Activated T-helper 1 cell treated with anti-CD3 and anti-CD28 coated beads, Interleukin-12 subunit alpha, Interleukin-12 subunit beta, Interleukin-2, Interleukin-4 antibody, amounts not matched to agents 30 ng/mL and 10 ng/mL and 1 ng/mL, durations not matched to agents 14 hours and 24 hours and 36 hours (primary cell): ENCODE measurements at regions of chr11 and their contacts with region 1.

Region 1: DNA sequence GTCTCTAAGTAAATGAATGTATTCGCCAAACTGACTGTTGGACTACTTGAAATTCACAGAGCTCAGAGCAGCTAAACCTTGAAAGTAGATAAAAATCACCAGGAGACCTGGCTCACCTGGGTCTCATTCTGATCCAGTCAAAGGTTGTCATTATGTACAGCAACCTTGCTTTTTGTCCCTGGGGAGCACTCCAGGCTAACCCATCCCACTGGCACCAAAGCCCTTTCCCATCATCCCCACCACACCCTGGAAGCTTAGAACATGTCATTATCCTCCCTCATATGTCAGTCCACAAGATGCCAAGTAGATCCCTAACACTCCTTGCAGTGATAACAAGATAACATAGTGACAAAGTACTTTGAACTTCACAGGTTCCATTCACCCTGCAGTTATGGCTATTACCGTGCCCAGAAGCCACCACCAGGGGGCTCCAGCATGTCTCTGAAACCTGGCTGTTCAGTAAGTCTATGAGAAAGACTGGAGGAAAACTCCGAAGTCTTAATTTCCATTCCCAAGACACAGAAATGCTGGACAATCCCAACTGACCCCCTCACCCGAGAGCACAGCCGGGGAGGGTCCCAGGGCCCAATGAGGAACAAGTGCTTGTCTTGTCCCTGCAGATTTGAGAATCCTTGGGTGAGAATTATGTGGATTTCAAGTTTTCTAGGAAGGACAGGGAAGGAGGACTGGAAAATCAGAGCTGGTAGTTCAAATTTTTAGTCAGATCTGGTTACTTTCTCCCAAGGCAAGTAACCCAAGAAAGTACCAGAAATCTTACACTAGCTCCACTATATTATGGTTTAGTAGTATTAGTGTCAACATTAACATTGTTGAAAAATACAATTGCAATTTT is 43.0 kb upstream of the USP47 start:
- DNase-seq: peak; percentile 30
- H3K4me3 Mint-ChIP-seq: no peak overlapping the region
- H3K27ac Mint-ChIP-seq: no peak overlapping the region
- H3K4me1 Mint-ChIP-seq: no peaks in the 10 kb centered on the region
- H3K27me3 Mint-ChIP-seq: peaks cover 18% of the 10 kb centered on the region

Region 2: GRCh38 chr11:11848891-11849746 is 50.3 kb after region 1 on chr11:
- intact Hi-C with region 1: loop called (anchors 1 kb)
- DNase-seq: peak; percentile 47
- H3K4me3 Mint-ChIP-seq: no peak overlapping the region
- H3K27ac Mint-ChIP-seq: no peak overlapping the region
- H3K4me1 Mint-ChIP-seq: peaks cover 44% of the 10 kb centered on the region
- H3K27me3 Mint-ChIP-seq: peaks cover 2% of the 10 kb centered on the region

Region 3: DNA sequence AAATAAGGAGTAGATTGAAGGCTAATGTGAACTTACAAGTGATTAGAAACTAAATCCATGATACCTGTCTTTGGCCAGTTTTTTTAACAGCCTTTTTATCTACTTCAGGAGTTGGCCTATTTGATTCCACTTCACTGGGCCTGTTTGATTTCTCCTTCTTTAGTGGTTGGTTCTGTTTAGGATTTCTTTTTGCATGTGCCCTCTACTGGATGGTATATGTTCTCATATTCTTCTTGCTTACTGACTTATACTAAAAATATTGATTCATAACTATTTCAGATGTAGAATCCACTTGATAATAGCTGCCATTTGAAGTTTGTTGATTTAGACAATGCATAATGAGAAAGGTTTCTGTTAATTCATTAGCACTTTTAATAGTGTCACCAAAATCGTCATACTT is 96.9 kb after region 1 on chr11:
- intact Hi-C with region 1: loop called (anchors 5 kb)
- DNase-seq: no peak
- H3K4me3 Mint-ChIP-seq: no peak overlapping the region
- H3K27ac Mint-ChIP-seq: no peak overlapping the region
- H3K4me1 Mint-ChIP-seq: peaks cover 14% of the 10 kb centered on the region
- H3K27me3 Mint-ChIP-seq: no peaks in the 10 kb centered on the region

Region 4: DNA sequence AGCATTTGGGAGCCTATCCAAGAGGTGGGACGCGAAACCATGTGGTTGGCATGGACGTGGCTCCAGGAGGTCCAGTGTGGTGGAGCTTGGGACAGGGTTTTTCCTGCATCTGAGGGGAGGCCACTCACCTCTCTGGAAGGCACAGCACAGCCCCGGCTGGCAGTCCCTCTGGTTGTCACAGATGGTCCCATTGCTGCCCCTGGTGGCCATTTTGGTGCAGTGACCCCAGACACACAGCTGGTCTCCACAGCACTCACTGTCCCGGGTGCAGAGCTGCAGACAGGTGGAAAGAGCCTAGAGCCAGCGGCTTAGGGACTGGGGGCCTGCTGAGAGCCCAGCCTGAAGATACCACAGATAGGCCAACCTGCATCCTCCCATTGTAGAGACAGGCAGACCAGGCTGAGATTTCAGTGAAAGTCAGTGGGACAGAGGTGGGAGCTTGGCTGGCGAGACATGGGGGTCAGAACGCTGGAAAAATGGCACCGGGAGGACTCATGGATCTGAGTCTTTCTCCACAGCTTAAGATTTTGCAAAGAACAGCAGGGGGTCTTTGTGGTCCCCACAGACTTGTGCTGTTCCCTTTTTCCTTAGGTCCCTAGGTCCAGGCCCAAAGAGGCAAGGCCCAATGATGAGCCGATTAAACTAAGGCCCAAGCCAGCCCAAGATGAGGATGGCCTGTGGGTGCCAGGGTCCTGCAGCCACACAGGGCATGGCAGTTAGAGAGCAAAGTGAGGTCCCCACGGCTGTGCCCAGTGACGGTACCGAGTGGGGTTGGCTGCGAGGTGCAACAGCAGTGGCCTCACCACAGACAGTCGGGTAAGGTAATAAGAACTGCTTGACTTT is 168.2 kb after region 1 on chr11:
- intact Hi-C with region 1: loop called (anchors 1 kb)
- DNase-seq: peak; percentile 48
- H3K4me3 Mint-ChIP-seq: no peak overlapping the region
- H3K27ac Mint-ChIP-seq: no peak overlapping the region
- H3K4me1 Mint-ChIP-seq: peaks cover 5% of the 10 kb centered on the region
- H3K27me3 Mint-ChIP-seq: peaks cover 11% of the 10 kb centered on the region